CD8-positive, alpha-beta T cell (primary cell): ENCODE measurements at regions of chr11 and their contacts with region 1.

Region 1: DNA sequence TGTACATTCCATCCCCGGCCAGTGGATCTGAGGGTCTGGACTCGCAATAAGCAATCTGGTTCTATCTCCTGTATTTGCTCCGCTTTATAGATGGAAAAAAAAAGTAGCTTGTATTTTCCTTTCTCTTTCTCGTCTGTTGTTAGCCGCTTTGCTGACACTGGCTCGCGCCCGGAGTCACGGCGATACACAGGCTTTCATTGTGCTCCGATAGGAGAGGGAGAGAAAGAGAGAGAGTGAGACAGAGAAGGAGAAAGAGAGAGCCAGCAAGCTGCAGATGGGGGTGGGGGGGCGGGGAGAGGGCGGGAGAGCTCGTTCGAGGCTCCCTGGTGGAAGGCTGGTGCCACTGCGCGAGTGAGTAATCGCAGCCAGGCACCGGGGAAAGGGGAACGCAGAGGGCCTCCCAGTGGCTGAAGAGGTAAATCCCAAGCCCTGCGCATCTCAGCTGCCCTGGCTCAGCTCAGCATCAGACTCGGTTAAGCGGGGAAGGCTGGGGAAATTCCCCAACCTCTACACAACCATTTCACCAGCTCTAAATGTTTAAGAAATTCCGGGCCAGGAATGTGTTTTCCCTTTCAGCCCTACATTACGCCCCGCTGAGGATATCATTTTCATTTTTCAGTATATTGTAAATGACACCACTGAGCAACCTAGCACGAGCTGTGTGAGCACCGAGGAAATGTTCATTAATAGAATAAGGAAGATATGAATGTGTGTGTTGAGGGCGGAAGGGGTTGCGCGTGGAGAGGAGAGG is at the start of gene MAML2:
- DNase-seq: peak; percentile 82 to 97 (median 89)
- ATAC-seq: peak; percentile 85
- H3K4me3 ChIP-seq: peak within 1 kb of the TSS; percentile 88 to 98
- H3K4me3 Mint-ChIP-seq: peak within 1 kb of the TSS; percentile 98
- H3K27ac ChIP-seq: peak within 1 kb of the TSS; percentile 66 to 83
- H3K27ac Mint-ChIP-seq: peak within 1 kb of the TSS; percentile 91
- H3K4me1 ChIP-seq: peaks cover 16% of the 10 kb centered on the region
- H3K4me1 Mint-ChIP-seq: peaks cover 39% of the 10 kb centered on the region
- H3K27me3 ChIP-seq: no peaks in the 10 kb centered on the region
- H3K27me3 Mint-ChIP-seq: no peaks in the 10 kb centered on the region
- CTCF ChIP-seq: peak; percentile 88
- total RNA-seq, gene MAML2: 41.2 to 42.3 TPM

Region 2: GRCh38 chr11:95330302-95330701 is 1012.8 kb before region 1 on chr11:
- CTCF ChIA-PET with region 1: no interaction called
- POLR2A ChIA-PET with region 1: no interaction called
- intact Hi-C with region 1: no loop called
- DNase-seq: no peak
- ATAC-seq: no peak
- H3K4me3 ChIP-seq: no peak overlapping the region
- H3K4me3 Mint-ChIP-seq: no peak overlapping the region
- H3K27ac ChIP-seq: no peak overlapping the region
- H3K27ac Mint-ChIP-seq: no peak overlapping the region
- H3K4me1 ChIP-seq: peaks cover 5% of the 10 kb centered on the region
- H3K4me1 Mint-ChIP-seq: peaks cover 14% of the 10 kb centered on the region
- H3K27me3 ChIP-seq: no peaks in the 10 kb centered on the region
- H3K27me3 Mint-ChIP-seq: no peaks in the 10 kb centered on the region
- CTCF ChIP-seq: no peak

Region 3: DNA sequence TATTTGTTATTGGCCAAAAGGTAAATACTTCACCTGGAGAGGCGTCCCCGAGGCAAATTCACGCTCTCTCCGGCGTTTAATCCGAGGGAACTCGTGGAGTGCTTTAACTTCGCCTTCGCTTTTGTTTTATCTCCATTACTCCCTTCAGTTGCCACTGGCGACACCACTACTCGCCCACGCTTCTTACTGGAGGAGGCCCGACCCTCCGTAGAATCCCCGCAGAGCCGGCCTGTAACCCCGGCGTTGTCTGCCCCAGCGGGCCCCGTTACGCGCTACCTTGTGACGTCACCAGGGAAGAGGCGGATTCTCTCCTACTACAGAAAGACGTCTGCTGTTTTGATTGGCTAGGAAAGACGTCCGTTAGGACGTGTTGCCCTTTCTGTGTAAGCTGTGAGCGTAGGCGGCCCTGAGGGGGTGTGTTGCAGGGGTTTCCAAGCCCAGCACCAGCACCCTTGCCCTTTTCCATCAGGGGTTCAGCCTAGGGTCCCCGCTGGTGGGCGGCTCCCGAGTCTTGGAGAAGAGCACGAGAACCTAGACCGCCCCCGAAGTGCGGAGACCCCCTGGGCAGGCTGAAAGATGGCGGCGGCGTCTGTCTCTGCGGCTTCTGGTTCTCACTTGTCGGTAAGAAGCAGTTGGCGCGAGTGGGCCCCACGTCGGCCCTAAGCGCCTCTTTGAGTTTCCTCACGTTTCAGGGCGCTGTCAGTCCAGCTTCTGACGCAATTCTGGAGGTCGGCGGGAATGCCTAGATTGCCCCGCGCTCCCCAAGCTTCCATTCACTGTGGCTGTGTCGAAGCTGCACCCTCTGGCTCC is 552.8 kb before region 1 on chr11 and contains the start of gene CEP57:
- CTCF ChIA-PET with region 1: interaction called, 5 read pairs
- POLR2A ChIA-PET with region 1: interaction called, 6 read pairs
- intact Hi-C with region 1: loop called in 1 of 2 experiments (anchors 1 kb)
- DNase-seq: peak; percentile 80 to 98 (median 94)
- ATAC-seq: peak; percentile 54
- H3K4me3 ChIP-seq: peak within 1 kb of the TSS; percentile 86 to 93
- H3K4me3 Mint-ChIP-seq: peak within 1 kb of the TSS; percentile 99
- H3K27ac ChIP-seq: peak within 1 kb of the TSS; percentile 99 to 100
- H3K27ac Mint-ChIP-seq: peak within 1 kb of the TSS; percentile 100
- H3K4me1 ChIP-seq: peaks cover 29% of the 10 kb centered on the region
- H3K4me1 Mint-ChIP-seq: peaks cover 63% of the 10 kb centered on the region
- H3K27me3 ChIP-seq: no peaks in the 10 kb centered on the region
- H3K27me3 Mint-ChIP-seq: no peaks in the 10 kb centered on the region
- CTCF ChIP-seq: no peak
- total RNA-seq, gene CEP57: 53.2 to 53.7 TPM

Region 4: DNA sequence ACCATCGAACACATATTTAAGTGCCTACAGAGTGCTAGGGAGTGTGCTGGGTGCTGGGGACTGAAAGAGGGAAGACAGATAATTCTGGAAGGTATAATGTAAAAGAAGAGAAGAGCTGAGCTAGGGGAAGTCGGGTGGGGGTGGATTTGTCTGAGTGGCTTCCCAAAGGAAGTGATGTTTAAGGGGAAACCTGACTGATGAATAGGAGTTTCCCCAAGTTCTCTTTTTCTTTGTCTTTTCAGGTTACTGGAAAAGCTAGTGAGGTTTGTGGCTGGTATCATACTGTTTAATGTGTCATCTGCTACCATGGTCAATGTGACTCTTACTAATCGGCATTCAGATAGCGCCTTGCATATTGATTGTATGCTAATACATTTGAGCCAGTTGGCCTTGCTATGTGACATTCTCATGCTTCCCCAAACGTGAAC is 267.6 kb before region 1 on chr11:
- CTCF ChIA-PET with region 1: interaction called, 19 read pairs
- POLR2A ChIA-PET with region 1: interaction called, 4 read pairs
- intact Hi-C with region 1: no loop called
- DNase-seq: peak in 2 of 9 experiments; percentile 14 to 41
- ATAC-seq: no peak
- H3K4me3 ChIP-seq: no peak overlapping the region
- H3K4me3 Mint-ChIP-seq: no peak overlapping the region
- H3K27ac ChIP-seq: peak overlapping the region in 1 of 2 experiments; percentile 9
- H3K27ac Mint-ChIP-seq: peak overlapping the region; percentile 69
- H3K4me1 ChIP-seq: peaks cover 4% of the 10 kb centered on the region
- H3K4me1 Mint-ChIP-seq: peaks cover 56% of the 10 kb centered on the region
- H3K27me3 ChIP-seq: no peaks in the 10 kb centered on the region
- H3K27me3 Mint-ChIP-seq: no peaks in the 10 kb centered on the region
- CTCF ChIP-seq: no peak

Region 5: GRCh38 chr11:96197801-96198701 is 145.1 kb before region 1 on chr11:
- CTCF ChIA-PET with region 1: interaction called, 19 read pairs
- POLR2A ChIA-PET with region 1: interaction called, 3 read pairs
- intact Hi-C with region 1: loop called in 1 of 2 experiments (anchors 5 kb)
- DNase-seq: no peak
- ATAC-seq: no peak
- H3K4me3 ChIP-seq: no peak overlapping the region
- H3K4me3 Mint-ChIP-seq: no peak overlapping the region
- H3K27ac ChIP-seq: no peak overlapping the region
- H3K27ac Mint-ChIP-seq: peak overlapping the region; percentile 81
- H3K4me1 ChIP-seq: peaks cover 62% of the 10 kb centered on the region
- H3K4me1 Mint-ChIP-seq: peaks cover 85% of the 10 kb centered on the region
- H3K27me3 ChIP-seq: no peaks in the 10 kb centered on the region
- H3K27me3 Mint-ChIP-seq: no peaks in the 10 kb centered on the region
- CTCF ChIP-seq: no peak

Region 6: GRCh38 chr11:96254087-96254486 is 89.0 kb before region 1 on chr11:
- CTCF ChIA-PET with region 1: interaction called, 36 read pairs
- POLR2A ChIA-PET with region 1: interaction called, 4 read pairs
- intact Hi-C with region 1: loop called (anchors 1 to 2 kb)
- DNase-seq: peak in 4 of 9 experiments; percentile 20 to 73 (median 44)
- ATAC-seq: no peak
- H3K4me3 ChIP-seq: peak overlapping the region; percentile 0 to 1
- H3K4me3 Mint-ChIP-seq: peak overlapping the region; percentile 64
- H3K27ac ChIP-seq: peak overlapping the region; percentile 12 to 38
- H3K27ac Mint-ChIP-seq: peak overlapping the region; percentile 85
- H3K4me1 ChIP-seq: peaks cover 82% of the 10 kb centered on the region
- H3K4me1 Mint-ChIP-seq: peaks cover 90% of the 10 kb centered on the region
- H3K27me3 ChIP-seq: no peaks in the 10 kb centered on the region
- H3K27me3 Mint-ChIP-seq: no peaks in the 10 kb centered on the region
- CTCF ChIP-seq: no peak

Region 7: GRCh38 chr11:96324960-96325359 is 18.2 kb before region 1 on chr11:
- CTCF ChIA-PET with region 1: interaction called, 16 read pairs
- POLR2A ChIA-PET with region 1: interaction called, 5 read pairs
- intact Hi-C with region 1: loop called in 1 of 2 experiments (anchors 2 kb)
- DNase-seq: no peak
- ATAC-seq: no peak
- H3K4me3 ChIP-seq: no peak overlapping the region
- H3K4me3 Mint-ChIP-seq: no peak overlapping the region
- H3K27ac ChIP-seq: no peak overlapping the region
- H3K27ac Mint-ChIP-seq: peak overlapping the region; percentile 38
- H3K4me1 ChIP-seq: peaks cover 46% of the 10 kb centered on the region
- H3K4me1 Mint-ChIP-seq: peaks cover 81% of the 10 kb centered on the region
- H3K27me3 ChIP-seq: no peaks in the 10 kb centered on the region
- H3K27me3 Mint-ChIP-seq: no peaks in the 10 kb centered on the region
- CTCF ChIP-seq: no peak

Region 8: GRCh38 chr11:96447208-96448110 is 104.3 kb after region 1 on chr11:
- CTCF ChIA-PET with region 1: no interaction called
- POLR2A ChIA-PET with region 1: no interaction called
- intact Hi-C with region 1: no loop called
- DNase-seq: no peak
- ATAC-seq: no peak
- H3K4me3 ChIP-seq: no peak overlapping the region
- H3K4me3 Mint-ChIP-seq: no peak overlapping the region
- H3K27ac ChIP-seq: no peak overlapping the region
- H3K27ac Mint-ChIP-seq: no peak overlapping the region
- H3K4me1 ChIP-seq: no peaks in the 10 kb centered on the region
- H3K4me1 Mint-ChIP-seq: no peaks in the 10 kb centered on the region
- H3K27me3 ChIP-seq: peaks cover 0 to 2% of the 10 kb centered on the region in 2 experiments
- H3K27me3 Mint-ChIP-seq: peaks cover 8% of the 10 kb centered on the region
- CTCF ChIP-seq: no peak